AG04449 (cell line): ENCODE measurements at regions of chr4 and their contacts with region 1.

Region 1: GRCh38 chr4:38804654-38805295 is at the start of gene TLR1:
- DNase-seq: peak; percentile 40
- H3K4me3 ChIP-seq: no peak within 1 kb of the TSS
- CTCF ChIP-seq: no peak

Region 2: DNA sequence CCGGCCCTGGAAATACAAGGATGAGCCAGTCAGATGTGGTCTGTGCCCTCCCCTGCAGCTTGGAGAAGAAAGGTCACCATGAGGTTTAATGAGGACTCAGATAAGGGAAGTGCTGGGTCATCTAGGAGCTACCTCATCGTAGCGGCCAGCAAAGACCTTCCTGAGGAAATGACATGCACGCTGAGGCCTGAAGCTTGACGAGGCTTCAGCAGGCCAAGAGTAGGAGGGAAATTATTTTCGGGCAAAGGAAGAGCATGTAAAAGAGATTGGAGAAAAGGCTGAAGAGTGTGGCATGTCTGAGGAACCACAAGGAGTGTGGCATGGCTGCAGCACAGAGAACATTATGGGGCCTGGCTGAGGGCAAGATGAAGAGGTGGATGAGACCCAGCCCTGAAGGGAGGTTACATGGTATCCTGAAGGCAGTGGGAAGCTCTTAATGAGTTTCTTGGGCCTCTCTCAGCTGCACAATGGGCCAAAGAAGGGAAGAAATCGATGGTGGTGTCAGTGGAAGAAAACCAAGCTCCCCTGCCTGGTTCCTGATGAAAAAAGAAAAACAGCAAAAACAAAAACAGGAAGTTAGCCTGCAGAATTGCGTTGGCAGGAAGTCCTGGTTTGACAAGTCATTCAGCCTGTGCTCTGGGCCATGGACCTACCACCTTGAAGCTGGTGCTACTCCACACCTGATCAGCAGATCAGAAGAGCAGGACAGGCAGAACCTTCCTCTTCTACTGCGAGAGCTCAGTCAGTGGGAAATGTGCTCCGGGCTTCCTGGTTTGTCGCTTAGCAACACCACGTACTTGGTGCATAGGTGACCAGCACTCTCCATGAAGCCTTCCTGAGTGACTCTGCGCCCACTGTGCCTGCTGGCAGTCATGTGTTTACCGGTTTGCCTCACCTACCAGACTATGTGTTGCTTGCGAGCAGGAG is 275.3 kb before region 1 on chr4:
- CTCF ChIA-PET with region 1: no interaction called
- POLR2A ChIA-PET with region 1: no interaction called
- DNase-seq: no peak
- H3K4me3 ChIP-seq: no peak overlapping the region
- CTCF ChIP-seq: no peak

Region 3: DNA sequence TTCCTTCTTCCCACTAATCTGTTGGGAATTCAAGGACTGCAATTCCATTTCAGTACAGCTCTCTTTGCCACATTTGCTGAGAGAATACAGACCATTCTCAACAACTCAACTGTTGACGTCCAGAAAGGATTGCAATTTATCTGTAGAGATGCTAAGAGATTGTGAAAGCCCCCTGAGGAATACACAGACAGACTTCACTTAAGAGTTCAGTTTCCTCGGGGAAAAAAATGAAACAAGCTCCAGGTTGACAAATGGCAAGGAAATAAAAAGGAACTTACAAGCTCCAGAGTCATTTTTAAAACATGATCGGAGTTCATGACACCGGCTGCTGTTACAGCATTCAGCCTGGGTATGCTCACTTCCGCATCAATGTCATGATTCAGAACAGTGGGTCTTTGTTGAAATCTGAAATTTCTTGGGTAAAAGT is 35.8 kb before region 1 on chr4:
- CTCF ChIA-PET with region 1: interaction called, 75 read pairs
- POLR2A ChIA-PET with region 1: no interaction called
- DNase-seq: no peak
- H3K4me3 ChIP-seq: no peak overlapping the region
- CTCF ChIP-seq: no peak

Region 4: GRCh38 chr4:38788327-38788726 is 16.4 kb before region 1 on chr4:
- CTCF ChIA-PET with region 1: interaction called, 191 read pairs
- POLR2A ChIA-PET with region 1: no interaction called
- DNase-seq: no peak
- H3K4me3 ChIP-seq: no peak overlapping the region
- CTCF ChIP-seq: no peak

Region 5: GRCh38 chr4:38815885-38816782 is 11.4 kb after region 1 on chr4:
- CTCF ChIA-PET with region 1: interaction called, 55 read pairs
- POLR2A ChIA-PET with region 1: no interaction called
- DNase-seq: no peak
- H3K4me3 ChIP-seq: no peak overlapping the region
- CTCF ChIP-seq: no peak